Ovary (tissue), 10 donors: ENCODE measurements at regions of chr10 and their contacts with region 1.

Region 1: GRCh38 chr10:22958338-22958737 is 30.5 kb downstream of the ARMC3 start:
- DNase-seq: no peak
- H3K4me3 ChIP-seq: no peak overlapping the region
- H3K27ac ChIP-seq: no peak overlapping the region
- H3K4me1 ChIP-seq: no peaks in the 10 kb centered on the region
- H3K27me3 ChIP-seq: no peaks in the 10 kb centered on the region
- CTCF ChIP-seq: no peak
- EP300 ChIP-seq: no peak
- POLR2A ChIP-seq: no peak

Region 2: DNA sequence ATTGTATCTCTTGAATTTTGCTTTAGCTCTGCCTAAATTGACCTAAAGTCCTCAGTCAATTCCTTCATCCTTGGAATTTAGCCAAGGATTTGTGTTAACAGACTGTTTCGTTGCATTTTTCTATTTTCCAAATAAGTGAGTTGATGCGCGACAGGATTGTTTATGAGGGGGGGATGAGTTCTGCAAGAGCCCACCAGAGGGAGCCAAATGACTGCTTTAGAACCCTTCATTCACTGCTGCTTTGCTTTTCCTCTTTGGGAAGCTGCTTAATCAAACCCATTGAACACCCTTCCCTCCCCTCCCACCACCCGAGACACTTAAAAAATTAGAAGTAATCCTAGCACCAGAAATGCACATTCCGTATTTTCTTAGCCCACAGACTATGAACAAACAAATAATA is 200.0 kb after region 1 on chr10:
- intact Hi-C with region 1: loop called in 1 of 4 experiments (anchors 2 kb)
- DNase-seq: peak in 2 of 5 donors; percentile 33 to 46
- H3K4me3 ChIP-seq: no peak overlapping the region
- H3K27ac ChIP-seq: no peak overlapping the region
- H3K4me1 ChIP-seq: no peaks in the 10 kb centered on the region
- H3K27me3 ChIP-seq: no peaks in the 10 kb centered on the region
- CTCF ChIP-seq: peak; percentile 39 to 53 (median 39)
- EP300 ChIP-seq: no peak
- POLR2A ChIP-seq: no peak